Activated CD4-positive, alpha-beta T cell treated with anti-CD3 and anti-CD28 coated beads, Interleukin-2, amount 10 ng/mL, durations not matched to agents 24 days and 14 days (primary cell): ENCODE measurements at regions of chr2 and their contacts with region 1.

Region 1: GRCh38 chr2:135531231-135532228 is at the start of gene R3HDM1:
- DNase-seq: peak; percentile 97
- H3K4me3 Mint-ChIP-seq: no peak within 1 kb of the TSS
- H3K27ac Mint-ChIP-seq: no peak within 1 kb of the TSS
- H3K4me1 Mint-ChIP-seq: peaks cover 29% of the 10 kb centered on the region
- H3K27me3 Mint-ChIP-seq: no peaks in the 10 kb centered on the region
- total RNA-seq, gene R3HDM1: 65.8 and 78.3 TPM in 2 replicates

Region 2: GRCh38 chr2:135004005-135004746 is 527.4 kb before region 1 on chr2:
- intact Hi-C with region 1: loop called (anchors 1 kb)
- DNase-seq: peak; percentile 91
- H3K4me3 Mint-ChIP-seq: peak overlapping the region; percentile 30
- H3K27ac Mint-ChIP-seq: no peak overlapping the region
- H3K4me1 Mint-ChIP-seq: peaks cover 5% of the 10 kb centered on the region
- H3K27me3 Mint-ChIP-seq: peaks cover 21% of the 10 kb centered on the region

Region 3: DNA sequence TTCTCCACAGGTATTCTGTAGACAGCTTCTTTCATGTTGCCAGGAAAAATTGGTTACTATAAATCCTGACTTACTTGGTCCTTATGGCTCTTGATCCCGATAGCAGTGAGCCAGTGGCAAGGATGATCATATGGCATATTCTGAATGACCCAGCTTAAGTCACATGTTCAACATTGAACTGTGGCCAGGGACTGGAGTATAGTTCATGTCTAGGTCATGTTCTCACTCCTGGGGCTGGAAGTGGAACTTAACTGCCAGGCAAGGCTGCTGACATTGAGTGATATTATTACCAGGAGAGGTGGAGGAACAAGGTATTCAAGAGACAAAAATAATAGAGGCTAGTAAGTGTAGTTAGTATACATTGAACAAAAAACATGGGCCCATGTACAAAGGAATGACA is 26.0 kb after region 1 on chr2:
- intact Hi-C with region 1: no loop called
- DNase-seq: no peak
- H3K4me3 Mint-ChIP-seq: no peak overlapping the region
- H3K27ac Mint-ChIP-seq: no peak overlapping the region
- H3K4me1 Mint-ChIP-seq: peaks cover 4% of the 10 kb centered on the region
- H3K27me3 Mint-ChIP-seq: no peaks in the 10 kb centered on the region

Region 4: DNA sequence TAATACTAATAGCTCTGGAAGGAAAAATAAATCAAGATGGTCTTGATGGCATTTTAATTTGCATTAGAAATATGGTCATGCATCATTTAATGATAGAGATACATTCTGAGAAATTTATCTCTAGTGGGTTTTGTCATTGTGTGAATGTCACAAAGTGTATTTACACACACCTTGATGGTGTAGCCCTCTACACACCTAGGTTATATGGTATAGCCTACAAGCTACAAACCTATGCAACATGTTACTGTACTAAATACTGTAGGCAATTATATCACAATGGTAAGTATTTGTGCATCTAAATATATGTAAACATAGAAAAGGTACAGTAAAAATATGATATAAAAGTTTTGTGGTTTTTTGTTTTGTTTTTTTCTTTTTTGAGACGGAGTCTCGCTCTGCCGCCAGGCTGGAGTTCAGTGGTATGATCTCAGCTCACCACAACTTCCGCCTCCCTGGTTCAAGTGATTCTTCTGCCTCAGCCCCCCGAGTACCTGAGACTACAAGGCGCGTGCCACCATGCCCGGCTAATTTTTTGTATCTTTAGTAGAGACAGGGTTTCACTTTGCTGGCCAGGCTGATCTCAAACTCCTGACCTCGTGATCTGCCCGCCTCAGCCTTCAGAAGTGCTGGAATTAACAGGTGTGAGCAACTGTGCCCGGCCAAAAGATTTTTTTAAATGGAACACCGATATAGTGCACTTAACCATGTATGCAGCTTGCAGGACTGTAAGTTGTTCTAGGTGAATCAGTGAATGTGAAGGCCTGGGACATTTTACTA is 126.5 kb after region 1 on chr2:
- intact Hi-C with region 1: loop called (anchors 1 kb)
- DNase-seq: peak; percentile 83
- H3K4me3 Mint-ChIP-seq: peak overlapping the region; percentile 78
- H3K27ac Mint-ChIP-seq: peak overlapping the region; percentile 81
- H3K4me1 Mint-ChIP-seq: peaks cover 19% of the 10 kb centered on the region
- H3K27me3 Mint-ChIP-seq: no peaks in the 10 kb centered on the region

Region 5: DNA sequence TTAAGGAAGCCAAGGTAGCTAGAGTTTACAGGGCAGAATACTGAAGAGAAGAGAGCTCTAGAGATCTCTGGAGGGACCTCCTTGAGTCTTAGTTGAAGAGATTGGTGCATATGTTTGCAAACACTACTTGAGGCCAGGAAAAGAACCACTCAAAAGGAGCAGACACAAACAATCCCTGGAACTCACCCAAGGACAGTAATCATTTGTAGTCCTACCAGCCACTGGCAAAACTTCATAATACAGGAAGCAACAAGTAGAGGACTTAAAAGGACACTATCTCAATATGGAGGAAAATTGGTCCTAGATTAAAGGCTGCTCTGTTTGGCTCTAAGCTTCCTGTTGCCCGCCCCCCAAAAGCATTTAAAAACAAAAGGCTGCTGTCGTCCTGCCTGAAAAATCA is 163.2 kb after region 1 on chr2:
- intact Hi-C with region 1: loop called (anchors 5 kb)
- DNase-seq: peak; percentile 45
- H3K4me3 Mint-ChIP-seq: no peak overlapping the region
- H3K27ac Mint-ChIP-seq: no peak overlapping the region
- H3K4me1 Mint-ChIP-seq: peaks cover 8% of the 10 kb centered on the region
- H3K27me3 Mint-ChIP-seq: no peaks in the 10 kb centered on the region

Region 6: DNA sequence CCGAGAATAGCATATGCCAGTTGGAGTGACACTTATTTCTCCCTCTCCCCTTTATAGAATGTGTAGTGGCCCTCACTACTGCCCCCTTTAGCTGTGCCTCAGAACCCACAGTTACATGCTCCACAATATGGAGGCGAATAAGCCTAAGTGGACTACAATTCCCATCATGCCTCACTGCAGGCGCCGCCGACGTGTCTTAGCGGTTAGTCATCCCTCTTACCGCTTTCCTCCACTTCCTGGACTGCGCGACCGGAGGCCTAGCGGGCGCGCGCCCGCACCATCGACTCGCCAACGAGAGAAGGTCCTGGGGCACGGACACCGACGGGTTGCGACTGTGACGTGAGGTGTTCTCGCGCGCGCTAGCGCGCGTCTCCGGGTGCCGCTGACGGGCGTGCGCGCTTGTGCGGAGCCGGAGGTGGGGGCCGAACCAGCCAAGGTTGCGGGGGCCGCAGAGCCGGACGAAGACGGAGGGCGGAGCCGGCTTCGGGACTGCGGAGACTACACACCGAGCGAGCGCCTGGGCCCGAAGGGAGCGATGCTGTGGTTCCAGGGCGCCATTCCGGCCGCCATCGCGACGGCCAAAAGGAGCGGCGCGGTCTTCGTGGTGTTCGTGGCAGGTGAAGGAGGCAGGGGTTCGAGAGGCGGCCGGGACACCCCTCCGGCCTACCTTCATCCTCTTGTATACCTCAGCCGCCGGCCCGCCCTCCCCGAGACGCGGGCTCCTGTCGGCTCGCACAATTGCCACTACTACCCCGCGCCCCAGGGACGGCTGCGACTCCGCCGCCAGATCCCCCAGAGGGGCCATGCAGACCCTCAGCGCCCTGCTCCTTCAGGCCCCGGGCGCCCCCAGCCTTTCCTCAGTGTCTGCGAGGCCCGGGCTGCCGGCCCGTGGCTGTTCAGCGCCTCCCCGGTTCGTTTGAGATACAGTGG is 210.1 kb after region 1 on chr2 and contains the start of gene UBXN4:
- intact Hi-C with region 1: loop called (anchors 1 kb)
- DNase-seq: peak; percentile 96
- H3K4me3 Mint-ChIP-seq: peak within 1 kb of the TSS; percentile 99
- H3K27ac Mint-ChIP-seq: peak within 1 kb of the TSS; percentile 100
- H3K4me1 Mint-ChIP-seq: peaks cover 36% of the 10 kb centered on the region
- H3K27me3 Mint-ChIP-seq: no peaks in the 10 kb centered on the region
- total RNA-seq, gene UBXN4: 116 and 127 TPM in 2 replicates